Activated T-helper 1 cell treated with anti-CD3 and anti-CD28 coated beads, Interleukin-12 subunit alpha, Interleukin-12 subunit beta, Interleukin-2, Interleukin-4 antibody, amounts not matched to agents 30 ng/mL and 10 ng/mL and 1 ng/mL, durations not matched to agents 14 hours and 24 hours and 36 hours (primary cell): ENCODE measurements at regions of chr20 and their contacts with region 1.

Region 1: GRCh38 chr20:2984956-2985661 is 58.3 kb upstream of the GNRH2 start:
- DNase-seq: no peak
- H3K4me3 Mint-ChIP-seq: no peak overlapping the region
- H3K27ac Mint-ChIP-seq: no peak overlapping the region
- H3K4me1 Mint-ChIP-seq: peaks cover 41% of the 10 kb centered on the region
- H3K27me3 Mint-ChIP-seq: no peaks in the 10 kb centered on the region

Region 2: DNA sequence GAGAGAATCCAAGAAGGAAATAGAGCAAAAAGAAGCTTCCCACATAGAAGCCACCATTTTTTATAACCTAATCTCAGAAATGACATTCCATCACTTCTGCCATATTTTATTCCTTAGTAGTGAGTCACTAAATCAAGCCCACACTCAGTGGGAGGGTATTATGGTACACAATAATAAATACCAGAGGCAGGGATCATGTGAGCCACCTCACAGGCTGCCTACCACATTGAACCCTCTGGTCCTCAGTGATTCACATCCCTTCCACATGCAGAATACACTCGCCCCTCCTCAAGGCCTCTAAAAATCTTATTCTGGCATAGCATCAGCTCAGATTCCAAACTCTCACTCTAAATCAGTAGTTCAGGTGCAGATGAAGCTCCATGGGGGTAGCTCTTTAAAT is 399.3 kb before region 1 on chr20:
- intact Hi-C with region 1: no loop called
- DNase-seq: no peak
- H3K4me3 Mint-ChIP-seq: no peak overlapping the region
- H3K27ac Mint-ChIP-seq: no peak overlapping the region
- H3K4me1 Mint-ChIP-seq: no peaks in the 10 kb centered on the region
- H3K27me3 Mint-ChIP-seq: peaks cover 21% of the 10 kb centered on the region

Region 3: GRCh38 chr20:2688041-2688591 is 297.0 kb before region 1 on chr20:
- intact Hi-C with region 1: loop called (anchors 5 kb)
- DNase-seq: peak; percentile 76
- H3K4me3 Mint-ChIP-seq: peak overlapping the region; percentile 16
- H3K27ac Mint-ChIP-seq: peak overlapping the region; percentile 77
- H3K4me1 Mint-ChIP-seq: peaks cover 34% of the 10 kb centered on the region
- H3K27me3 Mint-ChIP-seq: peaks cover 13% of the 10 kb centered on the region

Region 4: GRCh38 chr20:2914160-2914559 is 70.9 kb before region 1 on chr20:
- intact Hi-C with region 1: loop called (anchors 1 kb)
- DNase-seq: no peak
- H3K4me3 Mint-ChIP-seq: no peak overlapping the region
- H3K27ac Mint-ChIP-seq: no peak overlapping the region
- H3K4me1 Mint-ChIP-seq: peaks cover 8% of the 10 kb centered on the region
- H3K27me3 Mint-ChIP-seq: no peaks in the 10 kb centered on the region

Region 5: DNA sequence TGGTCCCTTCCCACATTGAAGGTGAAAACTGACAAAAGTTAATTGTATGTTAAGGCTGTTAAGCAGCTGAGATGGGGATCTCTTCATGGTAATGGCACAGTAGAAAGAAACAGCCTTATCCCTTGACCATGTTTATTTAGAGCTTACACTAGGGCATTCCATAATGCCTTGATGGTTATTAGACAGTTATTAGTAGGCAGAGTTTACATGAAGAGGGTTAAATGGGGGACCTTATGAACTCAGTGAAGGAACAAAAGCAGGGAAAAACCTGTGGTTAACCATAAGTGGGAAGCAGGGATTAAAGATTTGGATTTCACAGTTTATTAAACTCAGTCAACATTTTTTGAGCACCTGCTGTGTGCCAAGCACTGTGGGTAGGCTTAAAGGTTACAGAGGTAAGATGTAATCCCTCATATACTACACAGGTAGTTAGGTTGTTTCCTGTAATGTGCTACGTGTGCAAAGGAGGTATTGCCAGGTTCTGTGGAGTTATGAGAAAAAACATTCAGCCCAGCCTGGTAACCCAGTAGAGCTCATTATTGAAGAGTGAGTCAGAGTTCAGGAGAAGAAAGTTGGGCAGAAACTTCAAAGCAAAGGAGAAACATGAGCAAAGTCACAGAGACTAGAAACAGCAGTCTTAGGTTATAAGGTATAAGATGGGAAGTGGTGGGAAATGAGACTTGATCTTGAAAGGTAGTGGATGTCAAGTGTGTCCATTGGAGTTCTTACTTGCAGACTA is 26.0 kb after region 1 on chr20:
- intact Hi-C with region 1: loop called (anchors 1 kb)
- DNase-seq: no peak
- H3K4me3 Mint-ChIP-seq: no peak overlapping the region
- H3K27ac Mint-ChIP-seq: peak overlapping the region; percentile 85
- H3K4me1 Mint-ChIP-seq: peaks cover 46% of the 10 kb centered on the region
- H3K27me3 Mint-ChIP-seq: no peaks in the 10 kb centered on the region

Region 6: GRCh38 chr20:3045816-3046676 is 60.9 kb after region 1 on chr20 and contains the start of gene MRPS26:
- intact Hi-C with region 1: loop called (anchors 1 kb)
- DNase-seq: peak; percentile 80
- H3K4me3 Mint-ChIP-seq: peak within 1 kb of the TSS; percentile 95
- H3K27ac Mint-ChIP-seq: peak within 1 kb of the TSS; percentile 78
- H3K4me1 Mint-ChIP-seq: peaks cover 11% of the 10 kb centered on the region
- H3K27me3 Mint-ChIP-seq: no peaks in the 10 kb centered on the region
- total RNA-seq, gene MRPS26: 106 and 114 TPM in 2 replicates

Region 7: GRCh38 chr20:3420211-3420707 is 435.1 kb after region 1 on chr20:
- intact Hi-C with region 1: loop called (anchors 1 kb)
- DNase-seq: peak; percentile 62
- H3K4me3 Mint-ChIP-seq: peak overlapping the region; percentile 40
- H3K27ac Mint-ChIP-seq: peak overlapping the region; percentile 80
- H3K4me1 Mint-ChIP-seq: peaks cover 10% of the 10 kb centered on the region
- H3K27me3 Mint-ChIP-seq: peaks cover 4% of the 10 kb centered on the region

Region 8: GRCh38 chr20:4973330-4974097 is 1988.4 kb after region 1 on chr20:
- intact Hi-C with region 1: loop called (anchors 5 kb)
- DNase-seq: peak; percentile 68
- H3K4me3 Mint-ChIP-seq: peak overlapping the region; percentile 75
- H3K27ac Mint-ChIP-seq: peak overlapping the region; percentile 85
- H3K4me1 Mint-ChIP-seq: peaks cover 21% of the 10 kb centered on the region
- H3K27me3 Mint-ChIP-seq: no peaks in the 10 kb centered on the region